Endothelial cell of umbilical vein (primary cell): ENCODE measurements at regions of chr17 and their contacts with region 1.

Region 1: GRCh38 chr17:81484195-81484979 is 28.2 kb downstream of the ACTG1 start:
- DNase-seq: peak; percentile 68
- H3K4me3 ChIP-seq: peak overlapping the region in 1 of 3 experiments; percentile 8
- H3K27ac ChIP-seq: no peak overlapping the region
- H3K4me1 ChIP-seq: peaks cover 18% of the 10 kb centered on the region
- H3K27me3 ChIP-seq: peaks cover 0 to 1% of the 10 kb centered on the region in 2 experiments
- CTCF ChIP-seq: peak; percentile 82 to 98
- POLR2A ChIP-seq: no peak

Region 2: GRCh38 chr17:81253358-81254131 is 230.8 kb before region 1 on chr17:
- CTCF ChIA-PET with region 1: interaction called, 117 read pairs
- POLR2A ChIA-PET with region 1: no interaction called
- dilution Hi-C with region 1: no loop called
- intact Hi-C with region 1: loop called (anchors 1 kb)
- DNase-seq: peak; percentile 43
- H3K4me3 ChIP-seq: no peak overlapping the region
- H3K27ac ChIP-seq: no peak overlapping the region
- H3K4me1 ChIP-seq: no peaks in the 10 kb centered on the region
- H3K27me3 ChIP-seq: no peaks in the 10 kb centered on the region
- CTCF ChIP-seq: peak; percentile 66 to 76
- POLR2A ChIP-seq: no peak

Region 3: DNA sequence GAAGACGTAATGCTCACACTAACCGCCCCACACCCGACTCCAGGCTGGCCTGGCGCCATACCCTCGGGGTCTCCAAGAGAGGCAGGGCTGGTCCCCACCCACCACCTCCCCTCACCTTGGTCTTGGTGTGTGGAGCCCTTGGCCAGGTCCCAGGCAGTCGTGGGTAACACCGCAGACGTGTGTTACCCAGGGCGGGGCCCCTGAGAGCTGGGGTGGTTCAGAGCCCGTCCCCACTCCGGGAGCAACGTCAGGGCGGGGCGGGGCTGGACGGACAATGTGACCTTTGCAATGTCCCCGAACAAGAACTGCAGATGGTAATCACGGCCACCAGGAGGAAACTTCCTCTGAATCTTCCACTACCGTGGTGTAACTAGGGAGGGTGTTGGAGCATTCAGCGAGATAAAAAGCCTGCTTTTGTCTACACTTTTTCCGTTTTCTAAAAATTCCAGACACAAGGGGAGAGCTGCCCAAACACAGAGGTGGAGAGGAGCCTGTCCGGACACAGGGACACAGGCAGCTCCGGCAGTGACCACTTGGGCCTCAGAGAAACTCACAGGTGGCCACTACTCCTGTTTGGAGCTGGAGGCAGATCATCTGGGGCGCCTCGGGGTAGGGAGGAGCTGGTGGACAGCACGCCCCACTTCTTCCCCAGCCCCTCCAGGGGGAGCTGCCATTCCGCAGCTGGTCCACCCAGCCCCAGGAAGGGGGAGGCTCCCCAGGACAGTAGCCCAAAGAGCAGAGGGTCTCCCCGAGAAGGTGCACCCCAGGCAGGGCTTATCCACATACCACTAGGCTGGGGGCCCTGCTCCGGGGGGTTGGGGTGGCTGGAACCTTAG is 175.1 kb before region 1 on chr17:
- CTCF ChIA-PET with region 1: interaction called, 29 read pairs
- POLR2A ChIA-PET with region 1: no interaction called
- dilution Hi-C with region 1: no loop called
- intact Hi-C with region 1: no loop called
- DNase-seq: peak; percentile 28
- H3K4me3 ChIP-seq: no peak overlapping the region
- H3K27ac ChIP-seq: no peak overlapping the region
- H3K4me1 ChIP-seq: peaks cover 2% of the 10 kb centered on the region
- H3K27me3 ChIP-seq: no peaks in the 10 kb centered on the region
- CTCF ChIP-seq: peak; percentile 34 to 37
- POLR2A ChIP-seq: no peak

Region 4: GRCh38 chr17:81394921-81395599 is 89.3 kb before region 1 on chr17 and contains the start of gene BAHCC1:
- CTCF ChIA-PET with region 1: interaction called, 58 read pairs
- POLR2A ChIA-PET with region 1: interaction called, 5 read pairs
- dilution Hi-C with region 1: no loop called
- intact Hi-C with region 1: loop called (anchors 1 kb)
- DNase-seq: peak; percentile 100
- H3K4me3 ChIP-seq: peak within 1 kb of the TSS; percentile 60 to 77 (median 76)
- H3K27ac ChIP-seq: peak within 1 kb of the TSS; percentile 85
- H3K4me1 ChIP-seq: peaks cover 33% of the 10 kb centered on the region
- H3K27me3 ChIP-seq: no peaks in the 10 kb centered on the region
- CTCF ChIP-seq: no peak
- POLR2A ChIP-seq: peak; percentile 97
- total RNA-seq, gene BAHCC1: 10.3 and 11.6 TPM in 2 replicates

Region 5: GRCh38 chr17:81428948-81429774 is 55.2 kb before region 1 on chr17:
- CTCF ChIA-PET with region 1: interaction called, 13 read pairs
- POLR2A ChIA-PET with region 1: no interaction called
- dilution Hi-C with region 1: no loop called
- intact Hi-C with region 1: no loop called
- DNase-seq: peak; percentile 74
- H3K4me3 ChIP-seq: no peak overlapping the region
- H3K27ac ChIP-seq: no peak overlapping the region
- H3K4me1 ChIP-seq: peaks cover 5% of the 10 kb centered on the region
- H3K27me3 ChIP-seq: no peaks in the 10 kb centered on the region
- CTCF ChIP-seq: no peak
- POLR2A ChIP-seq: no peak

Region 6: GRCh38 chr17:81507433-81508190 is 23.2 kb after region 1 on chr17:
- CTCF ChIA-PET with region 1: interaction called, 11 read pairs
- POLR2A ChIA-PET with region 1: interaction called, 3 read pairs
- dilution Hi-C with region 1: no loop called
- intact Hi-C with region 1: loop called (anchors 2 kb)
- DNase-seq: peak; percentile 31
- H3K4me3 ChIP-seq: no peak overlapping the region
- H3K27ac ChIP-seq: no peak overlapping the region
- H3K4me1 ChIP-seq: peaks cover 8% of the 10 kb centered on the region
- H3K27me3 ChIP-seq: no peaks in the 10 kb centered on the region
- CTCF ChIP-seq: no peak
- POLR2A ChIP-seq: peak; percentile 46

Region 7: GRCh38 chr17:81528636-81529436 is 44.4 kb after region 1 on chr17:
- CTCF ChIA-PET with region 1: no interaction called
- POLR2A ChIA-PET with region 1: no interaction called
- dilution Hi-C with region 1: no loop called
- intact Hi-C with region 1: no loop called
- DNase-seq: no peak
- H3K4me3 ChIP-seq: no peak overlapping the region
- H3K27ac ChIP-seq: no peak overlapping the region
- H3K4me1 ChIP-seq: no peaks in the 10 kb centered on the region
- H3K27me3 ChIP-seq: no peaks in the 10 kb centered on the region
- CTCF ChIP-seq: no peak
- POLR2A ChIP-seq: no peak